Endothelial cell of umbilical vein (primary cell): ENCODE measurements at regions of chr10 and their contacts with region 1.

Region 1: DNA sequence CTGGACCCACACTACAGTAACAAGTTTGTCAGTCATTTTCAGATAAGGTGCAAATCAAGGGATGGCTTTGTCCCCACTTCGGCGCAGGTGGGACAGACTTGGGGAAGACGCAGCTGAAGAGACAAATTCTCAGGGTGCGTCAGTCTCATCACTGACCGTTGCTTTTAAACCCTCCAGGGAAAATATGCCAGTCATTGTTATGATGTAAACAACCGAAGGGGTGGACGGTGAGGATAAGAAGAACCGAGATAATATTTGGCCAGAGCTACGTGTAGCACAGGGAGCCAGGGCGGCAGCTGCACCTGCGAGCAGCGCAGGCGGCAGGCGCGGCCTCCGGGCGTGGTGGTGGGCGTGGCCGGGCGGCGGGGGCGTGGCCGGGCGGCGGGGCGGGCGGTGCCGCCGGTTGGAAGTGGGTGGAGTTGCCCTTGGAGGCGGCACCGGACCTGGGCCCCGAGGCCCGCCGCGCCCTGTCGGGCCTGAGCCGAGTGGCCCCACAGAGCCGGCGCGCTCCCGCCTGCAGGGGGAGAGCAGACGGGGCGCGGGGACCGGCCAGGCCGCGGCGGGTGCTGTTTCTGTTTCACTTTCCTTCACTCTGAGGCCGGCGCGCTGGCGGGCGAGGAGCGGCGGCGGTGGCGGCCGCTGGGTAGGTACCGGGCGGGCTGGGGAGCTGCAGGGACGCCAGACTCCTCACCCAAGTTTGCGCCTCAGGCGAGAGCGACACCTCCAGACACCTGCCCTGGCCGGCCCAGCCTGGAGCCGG is at the start of gene PCGF5:
- DNase-seq: peak; percentile 85
- H3K4me3 ChIP-seq: peak within 1 kb of the TSS; percentile 87 to 96 (median 91)
- H3K27ac ChIP-seq: peak within 1 kb of the TSS; percentile 75
- H3K4me1 ChIP-seq: peaks cover 10% of the 10 kb centered on the region
- H3K27me3 ChIP-seq: no peaks in the 10 kb centered on the region
- CTCF ChIP-seq: peak; percentile 16 to 49
- POLR2A ChIP-seq: peak; percentile 63
- total RNA-seq, gene PCGF5: 26.0 and 29.8 TPM in 2 replicates

Region 2: DNA sequence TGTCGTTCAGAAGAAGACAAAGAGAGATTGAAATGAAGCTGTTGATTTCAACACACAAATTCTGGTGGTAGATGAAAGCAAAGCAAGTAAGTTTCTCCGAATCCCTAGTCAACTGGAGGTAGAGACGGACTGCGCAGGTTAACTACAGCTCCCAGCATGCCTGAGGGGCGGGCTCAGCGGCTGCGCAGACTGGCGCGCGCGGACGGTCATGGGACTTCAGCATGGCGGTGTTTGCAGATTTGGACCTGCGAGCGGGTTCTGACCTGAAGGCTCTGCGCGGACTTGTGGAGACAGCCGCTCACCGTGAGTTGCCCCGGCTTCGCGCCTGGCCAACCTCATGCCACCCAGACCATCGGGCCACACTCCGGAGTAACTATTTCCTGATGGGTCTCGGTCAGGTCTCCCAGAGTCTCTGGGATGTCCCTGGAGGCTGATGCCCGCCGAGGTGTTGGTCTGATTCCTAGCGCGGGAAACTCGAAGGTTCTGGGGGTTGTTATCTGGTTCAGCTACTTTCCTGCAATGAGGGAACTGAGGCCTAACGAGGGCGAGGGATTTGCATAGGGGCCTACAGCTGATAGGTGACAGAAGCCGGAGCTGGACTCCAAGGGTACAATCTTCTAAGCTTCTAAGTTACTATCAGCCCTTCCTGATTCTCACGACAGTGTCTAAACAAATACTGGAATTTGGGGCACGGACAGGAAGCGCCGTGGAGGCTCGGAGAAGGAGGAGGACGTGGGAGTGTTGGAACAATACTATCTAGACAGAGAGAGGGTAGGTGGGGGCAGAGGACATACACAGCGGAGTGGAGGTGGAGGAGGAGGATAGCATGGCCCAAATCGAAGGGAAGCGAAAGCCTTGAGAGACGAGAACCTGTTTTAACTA is 348.4 kb before region 1 on chr10 and contains the start of gene RPP30:
- CTCF ChIA-PET with region 1: no interaction called
- POLR2A ChIA-PET with region 1: no interaction called
- dilution Hi-C with region 1: no loop called
- intact Hi-C with region 1: loop called (anchors 1 kb)
- DNase-seq: peak; percentile 92
- H3K4me3 ChIP-seq: peak within 1 kb of the TSS; percentile 89 to 93 (median 91)
- H3K27ac ChIP-seq: peak within 1 kb of the TSS; percentile 61
- H3K4me1 ChIP-seq: peaks cover 18% of the 10 kb centered on the region
- H3K27me3 ChIP-seq: peaks cover 13 to 19% of the 10 kb centered on the region in 2 experiments
- CTCF ChIP-seq: no peak
- POLR2A ChIP-seq: peak; percentile 80
- total RNA-seq, gene RPP30: 44.3 and 47.8 TPM in 2 replicates

Region 3: DNA sequence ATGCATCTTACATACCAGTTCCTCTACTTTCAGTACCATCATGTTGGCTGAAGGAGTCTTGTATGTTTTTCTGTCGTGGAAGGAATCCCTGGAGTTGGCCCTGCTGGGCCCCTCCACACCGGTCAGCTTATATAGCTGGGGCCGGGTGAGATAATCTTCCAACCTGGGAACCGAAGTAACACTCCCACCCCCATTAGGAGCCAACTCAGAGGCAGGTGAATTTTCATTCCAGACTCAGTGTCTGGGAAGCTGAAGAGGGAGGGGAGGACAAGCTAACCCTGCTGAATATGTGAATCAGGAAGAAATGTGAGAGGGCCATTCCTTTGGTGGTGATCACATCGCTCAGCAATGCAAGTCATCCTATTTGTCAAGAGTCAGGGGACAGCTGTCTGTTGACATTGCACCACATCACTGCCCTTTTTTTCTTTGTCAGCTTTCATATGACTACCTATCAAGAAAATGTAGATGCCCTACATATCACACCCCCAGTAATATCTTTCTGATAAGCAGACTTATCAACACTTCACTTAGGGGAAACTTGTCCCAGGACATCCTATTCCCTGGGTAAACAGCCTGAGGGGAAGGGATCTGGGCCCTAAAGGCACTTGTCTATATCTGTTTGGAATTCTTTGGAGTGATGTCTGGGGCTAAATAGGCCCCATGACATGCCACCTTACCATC is 299.2 kb before region 1 on chr10 and contains the start of gene ANKRD1:
- CTCF ChIA-PET with region 1: no interaction called
- POLR2A ChIA-PET with region 1: no interaction called
- dilution Hi-C with region 1: no loop called
- intact Hi-C with region 1: loop called (anchors 2 kb)
- DNase-seq: peak; percentile 97
- H3K4me3 ChIP-seq: peak within 1 kb of the TSS; percentile 52 to 98 (median 56)
- H3K27ac ChIP-seq: peak within 1 kb of the TSS; percentile 82
- H3K4me1 ChIP-seq: peaks cover 28% of the 10 kb centered on the region
- H3K27me3 ChIP-seq: no peaks in the 10 kb centered on the region
- CTCF ChIP-seq: no peak
- POLR2A ChIP-seq: peak; percentile 94
- total RNA-seq, gene ANKRD1: 591 and 664 TPM in 2 replicates

Region 4: GRCh38 chr10:91163269-91163868 is 57.0 kb before region 1 on chr10:
- CTCF ChIA-PET with region 1: no interaction called
- POLR2A ChIA-PET with region 1: no interaction called
- dilution Hi-C with region 1: no loop called
- intact Hi-C with region 1: loop called (anchors 1 kb)
- DNase-seq: peak; percentile 55
- H3K4me3 ChIP-seq: peak overlapping the region; percentile 61 to 84 (median 71)
- H3K27ac ChIP-seq: peak overlapping the region; percentile 74
- H3K4me1 ChIP-seq: peaks cover 6% of the 10 kb centered on the region
- H3K27me3 ChIP-seq: no peaks in the 10 kb centered on the region
- CTCF ChIP-seq: no peak
- POLR2A ChIP-seq: peak; percentile 21

Region 5: DNA sequence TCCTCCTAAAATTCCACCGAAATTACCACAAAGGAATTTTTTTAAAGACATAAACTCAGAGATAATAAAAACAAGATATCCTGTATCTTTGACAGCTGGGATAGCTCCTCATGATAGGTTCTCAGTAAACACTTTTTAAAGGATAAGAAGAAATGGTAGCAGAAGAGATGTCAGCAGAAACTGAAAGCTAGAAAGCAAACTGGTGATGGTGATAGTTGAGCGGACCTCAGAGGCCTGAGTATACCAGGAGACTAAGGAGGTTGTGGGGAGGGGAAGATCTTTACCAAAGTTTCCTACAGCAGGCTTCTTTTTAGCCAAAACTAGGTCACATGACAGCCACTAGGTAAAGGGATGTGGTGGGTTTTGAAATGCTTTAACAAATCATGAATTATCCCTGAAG is 22.6 kb after region 1 on chr10:
- CTCF ChIA-PET with region 1: no interaction called
- POLR2A ChIA-PET with region 1: no interaction called
- dilution Hi-C with region 1: no loop called
- intact Hi-C with region 1: loop called (anchors 2 kb)
- DNase-seq: no peak
- H3K4me3 ChIP-seq: no peak overlapping the region
- H3K27ac ChIP-seq: no peak overlapping the region
- H3K4me1 ChIP-seq: peaks cover 9% of the 10 kb centered on the region
- H3K27me3 ChIP-seq: no peaks in the 10 kb centered on the region
- CTCF ChIP-seq: no peak
- POLR2A ChIP-seq: no peak